Dorsolateral prefrontal cortex (tissue), 120 donors: ENCODE measurements at regions of chr17 and their contacts with region 1.

Region 1: GRCh38 chr17:48618256-48618897 is 3.3 kb upstream of the HOXB8 start:
- DNase-seq: peak; percentile 78 to 91 (median 82)
- H3K4me3 ChIP-seq: no peak overlapping the region
- H3K27ac ChIP-seq: no peak overlapping the region
- H3K27me3 ChIP-seq: peaks cover 31 to 100% (median 98%) of the 10 kb centered on the region in 45 donors
- CTCF ChIP-seq: peak; percentile 56 to 100 (median 98)

Region 2: DNA sequence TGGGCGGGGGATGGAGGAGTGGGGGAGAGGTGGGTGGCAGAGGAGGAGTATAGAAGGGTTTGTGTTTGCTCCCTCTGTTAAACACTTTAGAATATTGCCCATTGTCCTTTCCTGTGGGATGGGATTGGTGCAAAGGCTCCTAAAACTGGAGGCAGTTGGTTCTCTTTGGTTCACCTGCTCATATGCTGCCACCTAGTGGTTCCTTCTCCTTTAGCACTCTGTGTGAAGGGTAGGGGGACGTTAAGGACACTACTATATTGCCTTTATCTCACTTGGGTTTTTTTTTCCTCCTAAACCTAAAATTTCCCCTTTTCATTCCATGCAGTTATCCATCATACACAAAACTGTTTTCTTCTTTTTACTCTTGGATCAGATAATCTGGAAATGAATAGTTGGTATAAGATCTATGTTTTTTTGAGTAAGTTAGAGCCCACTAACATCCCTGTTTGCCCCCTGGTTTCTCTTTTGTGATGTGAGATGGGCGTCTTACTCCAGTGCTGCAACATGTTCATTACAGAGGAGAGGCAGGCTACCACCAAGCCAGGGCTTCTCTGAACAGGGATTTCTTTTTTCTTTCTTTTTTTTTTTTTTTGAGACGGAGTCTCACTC is 487.1 kb before region 1 on chr17:
- intact Hi-C with region 1: loop called in 1 of 2 experiments (anchors 10 kb)
- DNase-seq: peak in 4 of 10 donors; percentile 38 to 60 (median 53)
- H3K4me3 ChIP-seq: no peak overlapping the region
- H3K27ac ChIP-seq: no peak overlapping the region
- H3K27me3 ChIP-seq: no peaks in the 10 kb centered on the region
- CTCF ChIP-seq: peak; percentile 50 to 95 (median 87)

Region 3: DNA sequence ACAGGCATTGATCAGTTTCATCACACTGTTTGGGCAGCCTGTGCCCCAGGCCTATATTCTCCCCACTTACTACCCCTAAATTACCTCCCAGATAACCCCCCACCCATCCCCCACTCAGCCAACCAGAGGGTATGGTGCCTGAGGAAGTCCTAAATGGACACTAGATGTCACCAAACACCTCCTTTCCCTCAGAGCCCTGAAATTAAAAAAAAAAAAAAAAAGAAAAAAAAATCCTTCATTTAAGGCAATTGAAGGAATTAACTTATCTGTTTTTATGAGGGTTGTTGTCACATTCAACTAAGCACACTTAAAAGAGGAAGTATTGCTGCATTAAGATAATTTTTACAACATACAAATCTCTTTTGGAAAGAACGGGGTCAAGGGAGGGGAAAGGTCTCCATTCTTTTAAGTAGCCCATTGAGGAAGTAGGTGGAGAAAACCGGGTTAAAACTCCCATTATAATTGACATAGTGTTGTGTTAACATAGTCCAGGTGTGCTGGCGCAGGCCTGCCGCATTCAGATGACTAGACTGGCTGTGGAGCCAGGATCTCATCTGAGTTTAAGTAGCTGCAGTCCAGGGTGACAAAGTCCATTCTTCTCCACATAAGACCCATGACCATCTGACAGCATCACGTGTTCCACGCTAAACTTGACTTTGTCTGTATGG is 464.6 kb before region 1 on chr17:
- intact Hi-C with region 1: loop called in 1 of 2 experiments (anchors 10 kb)
- DNase-seq: no peak
- H3K4me3 ChIP-seq: no peak overlapping the region
- H3K27ac ChIP-seq: no peak overlapping the region
- H3K27me3 ChIP-seq: peaks cover 2 to 88% (median 60%) of the 10 kb centered on the region in 45 donors
- CTCF ChIP-seq: peak in 41 of 56 donors; percentile 10 to 56 (median 31)

Region 4: DNA sequence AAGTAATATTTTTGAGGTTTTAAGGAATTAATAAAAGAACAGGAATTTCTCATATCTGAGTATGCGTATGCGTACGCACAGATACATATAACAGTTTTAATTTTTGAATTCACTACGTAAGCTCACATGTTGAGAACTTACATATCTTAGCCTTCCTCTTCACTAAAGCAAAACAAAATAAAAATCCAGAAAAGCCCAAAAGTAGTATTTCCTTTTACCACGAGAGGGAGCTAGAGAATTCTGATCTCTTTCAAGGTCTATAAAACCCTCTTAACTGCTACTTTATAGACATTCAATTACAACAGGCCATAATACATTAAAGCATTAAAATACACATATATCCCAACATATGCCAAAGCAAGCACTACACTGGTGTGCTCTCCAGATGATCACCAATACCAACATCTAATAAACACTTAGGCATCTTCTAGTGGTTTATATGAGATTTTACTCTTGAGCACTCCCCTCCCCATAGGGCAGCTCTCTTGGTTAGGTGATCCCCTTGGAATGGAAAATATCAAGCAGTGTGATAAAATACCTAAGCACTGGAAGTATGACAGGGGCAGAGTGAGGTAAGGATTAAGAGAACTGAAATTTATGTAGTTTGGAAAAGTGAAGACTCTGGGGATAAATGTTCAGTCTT is 282.4 kb before region 1 on chr17:
- intact Hi-C with region 1: loop called (anchors 5 to 10 kb)
- DNase-seq: no peak
- H3K4me3 ChIP-seq: no peak overlapping the region
- H3K27ac ChIP-seq: no peak overlapping the region
- H3K27me3 ChIP-seq: peaks cover 0 to 100% (median 74%) of the 10 kb centered on the region in 45 donors
- CTCF ChIP-seq: peak; percentile 57 to 85 (median 74)

Region 5: DNA sequence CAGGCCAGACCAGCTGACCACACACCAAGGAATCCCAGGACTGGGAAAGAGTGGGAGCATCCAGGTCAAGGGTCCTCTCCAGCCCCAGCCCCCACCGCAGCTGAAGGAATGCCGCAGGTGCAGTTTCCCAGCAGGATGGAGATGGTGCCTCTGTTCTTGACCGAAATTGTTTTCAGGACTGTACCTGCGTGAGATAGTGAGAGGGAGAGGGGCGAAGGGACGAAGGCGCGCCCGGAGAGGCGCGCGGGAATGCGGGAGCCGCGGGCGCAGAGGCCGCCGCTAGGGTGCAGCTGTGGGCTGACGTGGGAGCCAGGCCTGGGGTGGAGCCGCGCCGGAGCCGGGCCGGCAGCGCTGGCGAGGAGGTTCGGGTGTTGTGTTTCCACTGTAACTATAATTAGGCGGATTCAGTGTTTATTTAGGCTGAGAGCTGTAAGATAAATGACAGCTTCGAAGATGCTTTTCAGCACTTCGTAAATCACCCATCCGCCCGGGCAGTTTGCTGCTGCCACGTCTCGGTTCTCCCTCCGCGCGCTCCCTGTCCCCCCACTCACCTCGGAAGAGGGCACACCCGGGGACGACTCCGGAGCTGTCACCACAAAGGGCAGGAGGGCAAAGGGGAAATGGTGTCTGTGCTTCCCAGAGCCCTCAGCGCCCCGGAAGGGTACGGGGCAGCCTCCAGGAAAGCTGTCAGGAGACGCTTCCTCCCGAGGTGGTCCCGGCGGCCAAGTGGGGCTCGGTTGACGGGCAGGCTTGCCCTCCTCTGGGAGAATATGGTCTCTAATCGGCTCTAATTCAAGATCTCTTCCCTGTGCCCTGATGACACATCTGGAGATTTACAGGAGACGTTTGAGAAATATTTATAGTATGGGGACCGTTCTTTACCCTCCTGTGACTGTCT is 125.7 kb before region 1 on chr17:
- intact Hi-C with region 1: loop called in 1 of 2 experiments (anchors 10 kb)
- DNase-seq: peak in 6 of 10 donors; percentile 7 to 62 (median 30)
- H3K4me3 ChIP-seq: peak overlapping the region in 53 of 59 donors; percentile 9 to 60 (median 39)
- H3K27ac ChIP-seq: no peak overlapping the region
- H3K27me3 ChIP-seq: peaks cover 0 to 94% (median 56%) of the 10 kb centered on the region in 45 donors
- CTCF ChIP-seq: peak in 52 of 56 donors; percentile 16 to 68 (median 52)

Region 6: DNA sequence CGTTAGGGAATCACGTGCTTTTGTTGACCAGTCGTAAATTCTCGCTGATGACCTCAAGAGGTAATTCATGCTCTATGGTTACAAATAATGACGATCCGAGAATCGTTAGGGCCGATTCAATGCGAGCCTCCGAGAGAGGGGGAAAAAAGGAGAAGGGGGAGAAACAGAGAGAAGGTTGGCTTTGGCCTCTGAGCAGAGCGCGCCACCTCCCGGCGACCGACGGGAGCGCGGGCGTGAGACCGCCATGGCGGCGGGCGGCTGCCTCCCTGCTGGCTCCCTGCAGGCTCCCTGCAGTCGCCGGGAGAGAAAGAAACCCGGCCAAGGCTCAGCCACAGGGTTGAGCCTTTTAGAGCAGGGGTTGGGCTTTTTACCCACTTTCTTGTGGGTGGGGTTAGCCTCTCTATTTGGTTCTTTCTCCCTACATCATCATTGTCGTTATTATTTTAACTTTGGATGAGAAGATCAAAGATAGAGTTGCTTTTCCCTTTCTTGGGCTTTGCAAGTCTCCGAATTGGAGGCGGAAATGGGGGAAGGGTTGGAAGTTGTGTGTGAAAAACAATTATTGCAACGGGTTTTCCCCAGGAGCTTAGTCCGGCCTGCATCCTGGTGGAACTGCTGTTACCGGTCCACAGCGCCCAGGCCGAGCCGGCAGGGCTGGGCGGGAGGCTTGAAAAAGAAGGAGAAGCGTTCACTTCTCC is 24.4 kb before region 1 on chr17:
- intact Hi-C with region 1: no loop called
- DNase-seq: no peak
- H3K4me3 ChIP-seq: no peak overlapping the region
- H3K27ac ChIP-seq: no peak overlapping the region
- H3K27me3 ChIP-seq: peaks cover 24 to 100% (median 99%) of the 10 kb centered on the region in 45 donors
- CTCF ChIP-seq: peak in 55 of 56 donors; percentile 18 to 65 (median 48)

Region 7: DNA sequence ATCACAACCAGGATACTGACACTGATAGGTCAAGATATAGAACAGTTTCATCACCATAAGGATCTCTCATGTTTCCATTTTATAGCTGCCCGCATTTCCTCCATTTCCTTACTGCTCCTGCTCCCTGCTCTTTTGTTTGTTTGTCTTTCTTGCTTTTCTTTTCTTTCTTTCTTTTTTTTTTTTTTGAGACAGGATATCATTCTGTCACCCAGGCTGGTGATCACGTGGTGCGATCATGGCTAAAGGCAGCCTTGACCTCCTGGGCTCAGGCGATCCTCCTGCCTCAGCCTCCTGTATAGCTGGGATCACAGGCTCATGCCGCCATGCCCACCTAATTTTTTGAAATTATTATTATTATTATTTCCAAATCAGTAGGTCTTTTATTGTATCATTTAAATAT is 72.3 kb after region 1 on chr17:
- intact Hi-C with region 1: no loop called
- DNase-seq: no peak
- H3K4me3 ChIP-seq: no peak overlapping the region
- H3K27ac ChIP-seq: no peak overlapping the region
- H3K27me3 ChIP-seq: peaks cover 0 to 30% (median 5%) of the 10 kb centered on the region in 45 donors
- CTCF ChIP-seq: no peak